Heart left ventricle (tissue), 16 donors: ENCODE measurements at regions of chr11 and their contacts with region 1.

Region 1: GRCh38 chr11:38089726-38090125 is 1491.7 kb upstream of the RAG2 start:
- DNase-seq: peak in 1 of 5 donors; percentile 8
- ATAC-seq: peak in 1 of 4 donors; percentile 36
- H3K4me3 ChIP-seq: no peak overlapping the region
- H3K27ac ChIP-seq: peak overlapping the region in 1 of 12 donors; percentile 5
- H3K4me1 ChIP-seq: no peaks in the 10 kb centered on the region
- H3K27me3 ChIP-seq: no peaks in the 10 kb centered on the region
- CTCF ChIP-seq: no peak
- POLR2A ChIP-seq: no peak

Region 2: GRCh38 chr11:38046571-38047135 is 43.1 kb before region 1 on chr11:
- intact Hi-C with region 1: loop called in 1 of 10 experiments (anchors 5 kb)
- DNase-seq: no peak
- ATAC-seq: no peak
- H3K4me3 ChIP-seq: no peak overlapping the region
- H3K27ac ChIP-seq: no peak overlapping the region
- H3K4me1 ChIP-seq: no peaks in the 10 kb centered on the region
- H3K27me3 ChIP-seq: no peaks in the 10 kb centered on the region
- CTCF ChIP-seq: no peak
- POLR2A ChIP-seq: no peak